ENCODE measurements at regions of chr11 and their contacts with region 1.

Region 1: GRCh38 chr11:355581-356458 is 13.5 kb upstream of the B4GALNT4 start:
- DNase-seq: peak; percentile 53 to 93 (median 87)
- ATAC-seq: peak; percentile 67 to 82 (median 68)
- H3K4me3 ChIP-seq: peak overlapping the region; percentile 55 to 71
- H3K4me3 Mint-ChIP-seq: peak overlapping the region in 2 of 3 donors; percentile 75 to 79
- H3K27ac ChIP-seq: peak overlapping the region; percentile 95
- H3K27ac Mint-ChIP-seq: peak overlapping the region; percentile 92 to 96
- H3K4me1 ChIP-seq: peaks cover 12 to 64% of the 10 kb centered on the region in 2 experiments
- H3K4me1 Mint-ChIP-seq: peaks cover 43 to 46% (median 46%) of the 10 kb centered on the region in 3 donors
- H3K27me3 ChIP-seq: no peaks in the 10 kb centered on the region
- H3K27me3 Mint-ChIP-seq: no peaks in the 10 kb centered on the region

Region 2: DNA sequence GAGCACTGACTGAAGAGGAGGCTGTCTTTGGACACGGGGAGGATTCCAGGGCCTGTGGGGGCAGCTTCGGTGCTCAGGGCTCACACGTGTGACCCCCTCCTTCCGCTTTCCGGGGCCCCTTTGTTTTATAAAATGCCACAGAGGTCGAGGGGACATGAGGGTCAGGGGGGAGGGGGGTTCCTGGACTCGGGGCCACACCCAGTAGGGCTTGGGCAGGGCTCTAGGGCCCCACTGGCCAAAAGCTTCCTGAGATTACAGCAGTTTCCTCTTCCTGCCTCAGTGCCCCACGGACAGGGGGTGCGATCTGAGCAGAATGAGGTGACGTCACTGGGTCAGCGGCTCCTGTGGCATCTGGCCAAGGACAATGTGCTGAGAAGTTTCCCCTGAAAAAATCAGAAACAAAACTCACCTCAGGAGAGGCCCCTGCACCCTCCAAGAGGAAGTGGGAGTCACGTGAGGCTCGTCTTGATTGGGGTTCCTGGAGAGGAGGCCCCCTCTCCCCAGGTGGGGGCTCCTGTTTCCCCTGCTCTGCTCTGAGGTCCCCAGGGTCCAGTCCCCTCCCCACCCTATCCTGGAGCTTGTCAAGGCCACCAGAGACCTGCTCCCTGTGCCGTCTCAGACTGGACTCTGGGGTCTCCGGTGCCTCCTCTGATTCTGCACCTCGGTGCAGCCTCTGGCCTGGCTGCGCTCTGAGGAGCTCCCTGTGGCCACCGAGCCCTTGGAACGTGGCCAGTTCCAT is 28.8 kb before region 1 on chr11:
- CTCF ChIA-PET with region 1: interaction called in 1 of 2 experiments, 3 read pairs
- POLR2A ChIA-PET with region 1: interaction called, 3 to 10 read pairs
- DNase-seq: peak in 34 of 35 experiments; percentile 41 to 85 (median 71)
- ATAC-seq: peak; percentile 58 to 73 (median 68)
- H3K4me3 ChIP-seq: peak overlapping the region; percentile 23 to 44
- H3K4me3 Mint-ChIP-seq: peak overlapping the region; percentile 21 to 74 (median 28)
- H3K27ac ChIP-seq: peak overlapping the region; percentile 94
- H3K27ac Mint-ChIP-seq: peak overlapping the region; percentile 96 to 97
- H3K4me1 ChIP-seq: peaks cover 47 to 77% of the 10 kb centered on the region in 2 experiments
- H3K4me1 Mint-ChIP-seq: peaks cover 62 to 76% (median 69%) of the 10 kb centered on the region in 3 donors
- H3K27me3 ChIP-seq: no peaks in the 10 kb centered on the region
- H3K27me3 Mint-ChIP-seq: no peaks in the 10 kb centered on the region

Measured in T-cell (primary cell).